Aorta (tissue), 5 donors: ENCODE measurements at regions of chr1 and their contacts with region 1.

Region 1: GRCh38 chr1:145957443-145958319 is at the start of gene LIX1L:
- DNase-seq: peak; percentile 98
- ATAC-seq: peak; percentile 92
- H3K4me3 ChIP-seq: peak within 1 kb of the TSS; percentile 64 to 97
- H3K27ac ChIP-seq: peak within 1 kb of the TSS; percentile 89 to 97
- H3K4me1 ChIP-seq: peaks cover 3 to 4% of the 10 kb centered on the region in 2 donors
- H3K27me3 ChIP-seq: no peaks in the 10 kb centered on the region
- total RNA-seq, gene LIX1L: 53.2 to 60.0 TPM

Region 2: DNA sequence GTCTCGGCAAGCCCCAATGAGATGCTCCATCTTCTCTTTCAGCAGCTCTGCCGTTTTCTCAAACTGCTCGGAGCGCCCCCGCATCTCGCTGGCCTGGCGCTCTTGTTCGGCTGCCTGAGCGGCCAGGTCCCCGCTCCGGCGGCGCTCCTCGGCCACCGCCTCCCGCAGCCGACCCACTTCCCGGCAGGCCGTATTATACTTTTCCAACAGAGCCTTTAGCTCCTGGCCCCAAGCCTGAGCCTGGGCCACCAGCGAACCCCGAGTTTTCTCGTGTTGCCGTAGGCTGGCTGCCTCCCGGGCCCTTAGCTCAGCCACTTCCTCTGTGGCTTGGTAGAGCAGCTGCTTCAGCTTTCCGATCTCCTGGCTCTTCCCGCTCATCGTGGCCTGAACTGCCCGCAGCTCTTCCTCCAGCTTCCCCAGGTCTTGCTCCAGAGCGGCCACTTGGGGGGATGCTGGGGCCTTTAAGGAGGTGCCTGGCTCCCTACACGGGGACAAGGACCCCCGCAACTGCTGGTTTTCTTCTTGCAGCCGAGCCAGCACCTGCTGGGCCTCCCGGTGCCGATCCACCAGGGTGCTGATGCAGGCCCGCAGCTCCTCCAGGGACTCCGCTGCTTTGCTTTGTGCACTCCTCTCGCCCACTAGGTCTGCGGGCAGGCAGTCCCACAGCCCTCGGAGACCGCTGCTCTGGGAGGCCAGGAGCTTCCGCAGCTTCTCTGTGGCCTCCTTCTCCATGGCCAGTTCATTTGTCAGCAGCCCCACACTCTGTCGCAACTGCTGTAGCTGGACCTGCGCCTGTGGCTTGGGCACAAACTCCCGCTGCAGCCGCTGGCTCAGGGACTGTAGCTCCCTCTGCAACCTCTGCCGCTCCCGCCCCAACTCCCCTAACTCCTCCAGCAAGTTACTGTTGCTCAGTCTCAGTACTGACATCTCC is 85.4 kb before region 1 on chr1:
- intact Hi-C with region 1: loop called in 1 of 2 experiments (anchors 10 kb)
- DNase-seq: peak; percentile 87 to 89
- ATAC-seq: peak; percentile 89
- H3K4me3 ChIP-seq: peak overlapping the region; percentile 32 to 36
- H3K27ac ChIP-seq: peak overlapping the region; percentile 6 to 69
- H3K4me1 ChIP-seq: no peaks in the 10 kb centered on the region
- H3K27me3 ChIP-seq: no peaks in the 10 kb centered on the region

Region 3: GRCh38 chr1:145918144-145918992 is 39.3 kb before region 1 on chr1 and contains the start of gene PEX11B:
- intact Hi-C with region 1: loop called in 1 of 2 experiments (anchors 5 kb)
- DNase-seq: peak; percentile 94 to 95
- ATAC-seq: peak; percentile 97
- H3K4me3 ChIP-seq: peak within 1 kb of the TSS; percentile 73 to 75
- H3K27ac ChIP-seq: peak within 1 kb of the TSS; percentile 7 to 49
- H3K4me1 ChIP-seq: no peaks in the 10 kb centered on the region
- H3K27me3 ChIP-seq: no peaks in the 10 kb centered on the region
- total RNA-seq, gene PEX11B: 14.9 to 20.6 TPM

Region 4: DNA sequence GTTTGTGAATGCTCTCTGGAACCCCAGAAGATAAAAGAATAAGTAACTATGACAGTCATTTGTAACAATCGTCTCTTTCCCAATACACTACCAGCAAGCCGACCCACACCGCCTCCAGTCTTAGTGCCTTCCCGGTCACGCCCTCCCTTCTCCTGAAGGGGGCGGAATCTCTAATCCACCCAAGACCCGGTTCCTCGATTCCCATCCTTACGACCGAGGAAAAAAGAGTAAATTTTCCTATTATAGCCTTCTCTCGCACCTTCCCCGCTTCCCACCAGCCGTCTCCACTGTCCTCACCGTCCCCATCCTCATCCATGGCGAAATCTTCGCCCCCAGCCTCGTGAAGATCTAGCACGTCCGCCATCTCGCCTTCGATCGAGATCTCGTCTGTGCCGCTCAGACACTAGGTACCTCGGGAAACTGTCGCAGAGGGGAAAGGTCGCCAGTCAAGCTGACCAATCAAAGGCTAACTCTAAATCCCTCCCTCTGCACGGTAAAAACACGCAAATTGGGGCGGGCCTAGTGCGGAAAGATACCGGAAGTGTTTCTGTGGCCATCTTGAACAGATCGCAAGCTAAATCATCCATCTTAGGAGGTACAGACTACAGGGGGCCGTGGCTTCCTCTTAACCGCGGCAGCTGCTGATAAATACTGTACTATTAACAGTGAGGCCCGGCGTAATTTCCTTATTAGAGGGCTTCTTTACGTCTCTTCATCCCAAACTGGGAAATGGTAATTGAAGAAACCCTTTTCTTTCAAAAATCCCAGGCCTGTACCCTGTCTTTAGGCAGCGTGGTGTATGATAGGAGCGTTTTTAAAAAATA is 30.4 kb before region 1 on chr1 and contains the start of gene RBM8A:
- intact Hi-C with region 1: loop called (anchors 2 kb)
- DNase-seq: peak; percentile 95 to 96
- ATAC-seq: peak; percentile 97
- H3K4me3 ChIP-seq: peak within 1 kb of the TSS; percentile 67 to 72
- H3K27ac ChIP-seq: peak within 1 kb of the TSS; percentile 69 to 77
- H3K4me1 ChIP-seq: no peaks in the 10 kb centered on the region
- H3K27me3 ChIP-seq: no peaks in the 10 kb centered on the region
- total RNA-seq, gene RBM8A: 81.2 to 84.5 TPM